Prostate gland (tissue), 2 donors: ENCODE measurements at regions of chr7 and their contacts with region 1.

Region 1: GRCh38 chr7:101941481-101942383 is 124.3 kb downstream of the CUX1 start:
- DNase-seq: peak; percentile 85
- H3K4me3 ChIP-seq: no peak overlapping the region
- H3K27ac ChIP-seq: peak overlapping the region; percentile 75 to 84
- H3K4me1 ChIP-seq: peaks cover 17% of the 10 kb centered on the region
- H3K27me3 ChIP-seq: no peaks in the 10 kb centered on the region
- CTCF ChIP-seq: no peak
- POLR2A ChIP-seq: no peak

Region 2: DNA sequence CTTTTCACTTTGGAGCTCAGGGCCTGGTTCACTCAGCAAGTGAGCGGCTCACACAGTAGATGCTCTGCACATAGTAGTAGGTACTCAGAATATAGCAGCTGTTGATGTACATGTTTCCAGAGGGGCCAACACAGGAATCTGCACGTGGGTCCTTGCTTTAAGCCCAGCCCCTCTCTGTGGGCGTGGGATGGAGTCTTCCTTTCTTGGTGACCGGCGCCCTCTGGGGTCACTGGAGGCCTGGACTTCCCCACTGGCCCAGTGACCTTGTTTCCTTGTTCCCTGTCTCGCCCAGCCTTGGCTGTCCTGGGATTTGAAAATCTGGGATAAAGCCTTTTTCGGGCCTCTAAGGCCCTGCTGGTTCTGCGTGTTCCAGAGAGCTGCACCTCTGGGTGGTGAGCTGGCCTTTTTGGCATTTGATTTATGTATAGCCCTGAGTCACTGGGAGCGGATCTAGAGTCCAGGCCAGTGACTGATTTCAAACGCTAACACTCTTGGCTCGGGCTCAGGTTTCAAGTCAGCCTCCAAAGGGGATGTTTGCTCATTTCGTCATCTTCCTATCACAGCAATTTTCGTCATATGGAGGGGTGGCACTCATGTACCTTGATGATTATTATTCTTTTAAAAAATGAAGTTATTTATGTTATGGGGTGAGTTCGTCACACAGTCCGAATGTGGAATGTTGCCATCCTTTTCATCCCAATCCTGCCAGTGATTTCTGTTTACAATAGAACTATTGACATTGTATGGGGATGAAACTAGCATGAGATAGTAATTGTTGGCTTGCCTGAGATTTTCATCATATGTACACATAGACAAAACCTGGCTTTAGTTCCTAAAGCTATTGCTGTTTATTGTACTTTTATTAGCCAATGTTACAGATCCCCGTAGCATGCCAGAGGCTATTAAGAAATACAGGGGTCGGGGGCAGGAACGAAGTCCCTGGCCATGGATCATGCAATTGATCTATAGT is 58.9 kb before region 1 on chr7:
- intact Hi-C with region 1: loop called (anchors 5 kb)
- DNase-seq: peak; percentile 97
- H3K4me3 ChIP-seq: no peak overlapping the region
- H3K27ac ChIP-seq: peak overlapping the region; percentile 90 to 92
- H3K4me1 ChIP-seq: peaks cover 39% of the 10 kb centered on the region
- H3K27me3 ChIP-seq: no peaks in the 10 kb centered on the region
- CTCF ChIP-seq: peak in 1 of 4 experiments; percentile 20
- POLR2A ChIP-seq: no peak